Colonic mucosa (tissue), 4 donors: ENCODE measurements at regions of chr22 and their contacts with region 1.

Region 1: DNA sequence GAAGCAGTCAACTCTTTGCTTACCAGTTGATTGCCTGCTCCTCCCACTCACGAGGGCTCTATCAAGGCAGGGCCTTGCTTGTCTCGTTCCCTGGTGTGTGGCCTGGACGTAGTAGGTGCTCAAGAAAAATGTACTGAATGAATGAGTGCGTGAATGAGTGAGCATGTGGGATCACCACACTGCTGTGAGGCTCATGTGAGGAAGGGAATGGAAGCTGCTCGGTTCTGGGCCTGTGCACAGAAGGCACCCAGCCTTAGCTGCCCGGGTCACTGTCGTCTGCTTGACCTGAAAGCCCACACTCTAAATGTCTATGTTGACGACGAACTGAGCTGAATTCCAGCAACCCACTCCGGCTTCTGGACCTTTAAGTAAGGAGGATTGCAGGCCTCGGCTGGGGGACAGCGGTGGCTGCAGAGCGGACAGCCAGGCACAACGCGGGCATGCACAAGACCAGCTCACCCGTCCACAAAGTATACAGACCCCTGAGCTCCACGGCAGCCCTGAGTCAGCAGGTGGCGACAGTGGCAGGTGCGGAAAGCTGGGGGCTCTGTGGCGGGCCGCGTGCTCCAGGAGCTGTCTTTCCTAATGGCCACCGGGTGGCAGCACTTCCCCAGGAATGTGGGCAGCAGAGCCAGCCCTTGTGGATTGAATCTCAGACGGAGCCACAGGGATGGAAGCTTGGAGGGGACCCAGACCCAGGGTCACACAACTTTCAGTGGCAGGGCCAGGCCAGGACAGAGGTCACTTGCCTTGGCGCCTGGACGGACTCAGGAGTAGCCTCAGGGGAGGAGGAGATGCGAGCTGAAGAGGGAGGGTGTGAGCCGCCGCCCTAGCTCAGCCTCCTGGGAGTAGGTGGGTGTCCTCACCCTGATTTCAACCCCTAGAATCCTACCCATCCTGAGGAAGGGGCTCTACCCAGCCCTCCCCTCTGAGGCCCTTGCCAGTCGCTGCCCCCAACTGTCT is 5.0 kb upstream of the PICK1 start:
- DNase-seq: peak; percentile 82
- H3K4me3 ChIP-seq: no peak overlapping the region
- H3K27ac ChIP-seq: no peak overlapping the region
- H3K4me1 ChIP-seq: no peaks in the 10 kb centered on the region
- H3K27me3 ChIP-seq: no peaks in the 10 kb centered on the region
- CTCF ChIP-seq: peak; percentile 77

Region 2: DNA sequence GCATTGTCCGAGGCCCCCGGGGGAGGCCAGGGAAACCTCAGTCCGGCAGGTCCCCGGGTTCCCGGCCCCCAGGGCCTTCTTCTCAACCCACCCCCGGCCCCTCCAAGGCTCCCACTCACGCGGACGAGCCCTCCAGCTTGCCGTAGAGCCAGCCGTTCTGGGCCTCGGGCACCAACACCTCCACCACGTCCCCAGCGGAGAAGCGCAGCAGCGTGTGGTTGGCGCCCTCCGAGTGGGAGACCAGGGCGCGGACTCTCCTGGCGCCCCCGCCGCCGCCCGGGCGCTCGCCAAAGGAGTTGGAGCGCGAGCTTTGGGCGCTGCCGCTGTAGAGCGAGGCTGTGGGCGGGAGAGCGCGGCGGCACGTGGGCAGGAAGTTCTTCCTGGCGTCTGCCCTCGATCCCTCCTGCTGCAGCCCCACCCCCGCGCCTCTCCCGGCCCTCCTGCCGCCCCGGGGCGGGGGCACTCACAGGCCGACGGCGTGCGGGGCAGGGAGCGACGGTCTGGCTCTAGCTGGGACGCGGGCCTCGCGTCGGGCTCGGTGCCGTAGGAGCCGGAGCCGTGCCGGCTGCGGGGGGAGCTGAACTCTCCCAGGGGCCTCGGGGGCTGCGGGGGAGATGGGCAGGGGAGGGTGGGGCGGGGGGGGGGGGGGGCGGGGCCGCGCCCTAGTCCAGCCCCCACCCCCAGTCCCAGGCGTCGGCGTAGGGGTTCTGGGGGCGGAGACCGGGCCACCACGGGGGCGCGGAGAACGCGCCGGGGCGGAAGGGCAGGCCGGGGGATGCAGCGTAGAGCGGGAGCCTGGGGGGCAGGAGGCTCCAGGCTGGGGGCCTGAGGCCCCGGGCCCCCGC is 36.7 kb after region 1 on chr22:
- intact Hi-C with region 1: no loop called
- DNase-seq: no peak
- H3K4me3 ChIP-seq: no peak overlapping the region
- H3K27ac ChIP-seq: no peak overlapping the region
- H3K4me1 ChIP-seq: no peaks in the 10 kb centered on the region
- H3K27me3 ChIP-seq: no peaks in the 10 kb centered on the region
- CTCF ChIP-seq: no peak

Region 3: DNA sequence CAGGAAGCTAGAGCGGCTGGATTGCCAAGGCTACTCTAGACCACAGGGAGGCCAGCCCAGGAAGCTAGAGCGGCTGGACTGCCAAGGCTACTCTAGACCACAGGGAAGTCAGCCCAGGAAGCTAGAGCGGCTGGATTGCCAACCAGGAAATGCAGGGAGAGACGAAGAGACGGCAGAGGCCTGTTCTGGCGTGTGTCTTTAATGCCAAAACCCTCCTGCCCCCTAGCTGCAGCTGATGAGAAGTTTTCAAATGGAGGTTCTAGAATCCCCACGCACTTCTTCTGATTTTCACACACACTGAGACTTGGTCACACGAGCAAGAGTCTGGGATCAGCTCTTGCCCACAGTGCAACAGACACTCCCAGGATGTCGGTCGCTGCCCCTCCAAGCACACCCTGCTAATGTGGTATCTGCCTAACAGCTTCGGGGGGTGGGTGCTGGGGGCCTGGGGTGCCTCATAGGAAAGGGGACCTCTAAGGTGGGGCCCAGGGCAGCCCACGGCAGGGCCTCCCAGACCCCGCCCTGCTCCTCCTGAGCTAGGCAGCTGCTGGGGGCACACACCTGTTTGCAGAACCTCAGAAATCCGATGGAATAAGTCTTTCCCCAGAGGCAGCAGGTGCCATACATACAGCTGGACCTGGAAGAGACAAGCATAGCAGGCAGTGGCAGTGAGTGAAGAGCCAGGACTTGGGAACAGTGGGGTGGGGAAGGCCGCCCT is 178.1 kb after region 1 on chr22:
- intact Hi-C with region 1: loop called (anchors 5 kb)
- DNase-seq: peak; percentile 85
- H3K4me3 ChIP-seq: no peak overlapping the region
- H3K27ac ChIP-seq: peak overlapping the region; percentile 50
- H3K4me1 ChIP-seq: peaks cover 18% of the 10 kb centered on the region
- H3K27me3 ChIP-seq: no peaks in the 10 kb centered on the region
- CTCF ChIP-seq: peak; percentile 52

Region 4: DNA sequence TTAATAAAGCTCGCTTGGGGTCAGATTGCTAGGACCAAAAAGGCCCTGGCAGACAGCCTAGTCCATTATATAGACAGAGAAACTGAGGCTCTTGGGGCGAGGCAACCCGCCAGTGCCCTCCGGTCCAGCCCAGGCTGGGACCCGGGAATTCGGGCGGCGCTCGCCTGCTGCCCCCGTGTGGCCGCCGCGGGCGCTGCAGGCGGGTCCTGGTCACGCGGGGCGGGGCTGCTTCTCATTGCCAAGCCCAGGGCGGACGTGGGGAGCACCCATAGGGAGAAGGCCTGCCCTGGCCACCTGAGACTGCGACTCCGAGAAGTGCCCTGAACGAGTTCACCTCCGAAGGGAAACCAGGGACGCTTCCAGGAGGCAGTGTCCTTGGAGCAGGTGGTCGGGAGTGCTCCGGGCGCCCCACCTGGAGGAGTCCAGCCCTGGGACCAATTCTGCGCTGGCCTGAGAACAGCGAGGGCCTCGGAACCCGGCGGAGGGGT is 301.0 kb after region 1 on chr22:
- intact Hi-C with region 1: loop called (anchors 5 kb)
- DNase-seq: peak; percentile 72
- H3K4me3 ChIP-seq: no peak overlapping the region
- H3K27ac ChIP-seq: no peak overlapping the region
- H3K4me1 ChIP-seq: no peaks in the 10 kb centered on the region
- H3K27me3 ChIP-seq: no peaks in the 10 kb centered on the region
- CTCF ChIP-seq: peak; percentile 98

Region 5: DNA sequence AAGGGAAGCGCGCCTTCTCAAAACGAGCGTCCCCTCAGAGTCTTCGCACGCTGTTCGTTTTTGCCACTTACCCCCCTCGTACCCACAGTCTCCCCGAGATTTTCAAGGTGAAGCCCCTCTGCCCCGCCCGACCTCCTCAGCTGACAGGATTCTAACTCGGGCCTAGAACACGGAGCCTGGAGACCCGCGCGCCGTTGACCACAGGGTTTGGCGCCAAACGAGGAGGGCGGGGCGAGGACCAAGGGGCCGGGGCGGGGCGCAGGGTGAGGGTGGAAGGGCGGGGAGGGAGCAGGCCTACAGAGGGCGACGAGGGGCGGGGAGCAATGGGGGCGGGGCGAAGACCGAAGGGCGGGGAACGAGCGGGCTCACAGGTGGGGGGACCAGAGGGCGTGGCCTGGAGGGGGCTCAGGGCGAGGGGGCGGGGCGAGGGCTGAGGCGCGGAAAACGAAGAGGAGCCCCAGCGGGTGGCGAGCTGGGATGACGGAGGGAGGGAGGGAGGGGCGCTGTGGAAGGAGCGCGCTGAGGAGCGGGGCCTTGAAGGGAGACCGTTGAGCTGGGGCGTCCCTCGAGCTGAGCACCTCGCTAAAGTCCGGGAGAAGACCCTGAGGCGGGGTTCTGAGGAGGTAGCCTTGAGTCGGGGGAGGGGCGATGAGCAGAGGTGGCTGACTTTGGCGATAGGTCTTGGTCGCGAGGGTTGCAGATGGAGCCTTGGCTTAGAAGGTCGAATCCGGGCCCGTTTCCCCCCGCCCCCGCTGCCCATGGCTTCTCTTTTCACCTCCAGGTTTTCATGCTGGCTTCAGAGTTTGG is 518.0 kb after region 1 on chr22 and contains the start of gene DMC1:
- intact Hi-C with region 1: loop called (anchors 5 kb)
- DNase-seq: peak; percentile 98
- H3K4me3 ChIP-seq: peak within 1 kb of the TSS; percentile 57
- H3K27ac ChIP-seq: no peak within 1 kb of the TSS
- H3K4me1 ChIP-seq: no peaks in the 10 kb centered on the region
- H3K27me3 ChIP-seq: no peaks in the 10 kb centered on the region
- CTCF ChIP-seq: no peak
- total RNA-seq, gene DMC1: 2.0 to 3.0 TPM